ENCODE measurements at regions of chr16 and their contacts with region 1.

Region 1: DNA sequence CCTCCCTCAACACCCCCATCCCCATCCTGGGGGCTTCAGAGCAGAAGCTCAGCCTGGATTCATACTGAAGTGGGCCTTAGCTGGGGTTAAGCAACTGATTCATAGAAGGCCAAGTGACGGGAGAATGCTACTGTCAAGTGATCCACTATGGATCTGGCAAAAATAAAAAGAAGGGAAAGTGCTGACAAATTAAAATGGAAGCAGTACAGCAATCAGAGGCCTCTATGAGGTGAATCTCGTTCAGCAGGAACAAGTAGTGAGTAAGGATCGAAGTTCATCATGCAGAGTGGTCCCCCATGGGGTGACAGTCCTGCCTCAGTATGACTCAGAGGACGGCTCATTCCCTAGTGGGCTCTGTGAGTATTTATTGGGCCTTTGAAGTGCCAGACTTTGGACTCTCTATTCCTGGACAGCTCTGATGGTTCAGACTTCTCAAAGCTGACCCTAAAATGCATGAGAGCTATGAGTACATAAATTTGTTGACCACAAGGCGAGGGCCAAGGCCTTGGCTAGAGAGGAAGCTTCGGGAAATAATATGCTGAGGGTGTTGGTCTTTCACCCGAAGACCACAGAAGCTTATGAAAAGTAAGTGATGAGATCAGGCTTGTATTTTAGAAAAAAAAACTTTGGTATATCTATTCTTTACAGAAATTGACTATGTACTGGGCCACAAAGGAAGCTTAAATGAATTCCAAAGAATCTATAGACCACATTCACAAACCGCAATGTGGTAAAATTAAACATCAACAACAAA is 5.3 kb upstream of the NSMCE1 start:
- DNase-seq: peak in 3 of 10 donors; percentile 38 to 54 (median 45)
- ATAC-seq: peak; percentile 75 to 77
- H3K4me3 Mint-ChIP-seq: peak overlapping the region; percentile 10 to 85 (median 71)
- H3K27ac Mint-ChIP-seq: peak overlapping the region; percentile 76 to 94 (median 86)
- H3K4me1 Mint-ChIP-seq: peaks cover 29 to 62% (median 44%) of the 10 kb centered on the region in 4 donors
- H3K27me3 Mint-ChIP-seq: no peaks in the 10 kb centered on the region

Region 2: DNA sequence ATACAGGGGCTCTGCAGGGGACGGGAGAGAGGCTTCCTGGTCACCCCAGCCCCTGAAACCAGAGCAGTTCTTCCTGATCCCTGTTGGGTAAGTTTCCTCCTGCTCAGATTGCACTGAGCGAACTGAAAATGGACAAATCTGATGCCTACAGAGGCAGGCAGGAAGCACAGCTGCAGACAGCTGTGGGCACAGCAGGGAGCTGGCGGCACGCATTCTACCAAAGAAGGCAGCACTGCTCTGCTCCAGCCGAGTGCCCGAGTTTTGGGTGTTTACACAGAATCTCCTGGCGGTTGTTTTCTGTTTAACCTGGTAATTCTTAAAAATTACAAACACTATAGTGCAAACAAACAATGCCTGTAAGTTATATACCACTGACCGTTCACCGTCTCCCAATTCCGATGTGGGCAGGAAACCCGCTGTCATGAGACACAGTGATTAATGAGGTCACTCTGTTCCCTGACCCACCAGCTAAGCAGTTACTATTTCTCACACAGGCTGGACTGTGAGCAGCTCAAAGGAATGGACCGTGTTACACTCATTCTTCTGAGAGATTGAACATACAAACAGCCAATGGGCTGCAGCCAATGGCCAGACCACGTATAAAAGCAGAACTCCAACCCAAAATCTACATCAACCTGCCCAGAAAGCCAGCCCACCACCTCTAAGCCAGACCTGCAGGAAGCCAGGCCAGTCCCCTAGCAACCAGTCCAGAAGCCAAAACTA is 30.8 kb before region 1 on chr16:
- POLR2A ChIA-PET with region 1: interaction called, 54 read pairs
- DNase-seq: peak in 3 of 10 donors; percentile 35 to 38 (median 36)
- ATAC-seq: peak; percentile 79 to 89
- H3K4me3 Mint-ChIP-seq: peak overlapping the region; percentile 38 to 79 (median 73)
- H3K27ac Mint-ChIP-seq: peak overlapping the region; percentile 70 to 93 (median 90)
- H3K4me1 Mint-ChIP-seq: peaks cover 35 to 85% (median 68%) of the 10 kb centered on the region in 4 donors
- H3K27me3 Mint-ChIP-seq: no peaks in the 10 kb centered on the region

Measured in naive thymus-derived CD8-positive, alpha-beta T cell (primary cell).